Posterior vena cava (tissue), 2 donors: ENCODE measurements at regions of chr6 and their contacts with region 1.

Region 1: DNA sequence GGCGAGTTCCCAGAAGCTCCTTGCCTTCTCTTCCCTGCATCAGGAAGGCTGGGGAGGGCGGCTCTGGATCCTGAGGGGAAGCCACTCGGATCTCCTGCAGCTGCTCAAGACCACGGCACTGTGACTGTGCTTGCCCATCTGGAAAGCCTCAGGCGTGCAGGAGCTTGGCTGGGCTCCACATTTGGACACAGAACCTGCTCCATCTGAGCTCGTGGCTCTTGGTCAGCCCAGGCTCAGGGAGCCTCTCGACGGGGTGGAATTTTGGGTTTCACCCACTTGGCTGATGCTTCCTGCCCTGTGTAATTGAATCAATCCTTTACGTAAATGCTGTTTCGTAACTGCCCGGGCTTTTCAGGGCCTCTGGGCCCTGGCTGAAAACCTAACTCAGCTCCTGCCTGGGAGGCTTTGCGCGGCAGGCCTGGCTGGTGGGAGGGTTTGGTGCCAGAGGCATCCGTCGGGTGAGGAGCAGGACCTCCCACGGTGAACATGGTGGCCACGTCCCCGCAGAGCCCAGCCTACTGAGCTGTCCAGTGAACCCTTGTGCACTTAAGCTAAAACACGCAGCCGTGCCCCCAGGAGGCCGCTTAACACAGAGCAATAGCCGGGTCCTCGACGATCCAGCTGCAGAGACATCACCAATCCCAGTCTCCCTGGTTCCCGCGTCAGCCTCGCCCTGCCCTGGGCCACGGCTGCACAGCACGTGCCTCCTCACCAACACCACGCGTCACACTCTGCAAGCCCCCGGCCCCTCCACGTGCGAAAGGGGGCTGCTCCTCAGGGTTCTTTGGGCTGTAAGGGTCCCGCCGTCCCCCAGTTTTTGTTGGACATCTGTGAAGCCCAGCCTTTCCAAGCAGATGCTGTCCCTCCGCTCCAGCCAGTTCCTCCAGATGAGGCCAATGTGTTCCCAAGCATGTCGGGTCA is 241.0 kb downstream of the DLL1 start:
- DNase-seq: peak; percentile 85

Region 2: GRCh38 chr6:169959136-169960002 is 90.5 kb before region 1 on chr6:
- intact Hi-C with region 1: no loop called
- DNase-seq: peak; percentile 79

Region 3: DNA sequence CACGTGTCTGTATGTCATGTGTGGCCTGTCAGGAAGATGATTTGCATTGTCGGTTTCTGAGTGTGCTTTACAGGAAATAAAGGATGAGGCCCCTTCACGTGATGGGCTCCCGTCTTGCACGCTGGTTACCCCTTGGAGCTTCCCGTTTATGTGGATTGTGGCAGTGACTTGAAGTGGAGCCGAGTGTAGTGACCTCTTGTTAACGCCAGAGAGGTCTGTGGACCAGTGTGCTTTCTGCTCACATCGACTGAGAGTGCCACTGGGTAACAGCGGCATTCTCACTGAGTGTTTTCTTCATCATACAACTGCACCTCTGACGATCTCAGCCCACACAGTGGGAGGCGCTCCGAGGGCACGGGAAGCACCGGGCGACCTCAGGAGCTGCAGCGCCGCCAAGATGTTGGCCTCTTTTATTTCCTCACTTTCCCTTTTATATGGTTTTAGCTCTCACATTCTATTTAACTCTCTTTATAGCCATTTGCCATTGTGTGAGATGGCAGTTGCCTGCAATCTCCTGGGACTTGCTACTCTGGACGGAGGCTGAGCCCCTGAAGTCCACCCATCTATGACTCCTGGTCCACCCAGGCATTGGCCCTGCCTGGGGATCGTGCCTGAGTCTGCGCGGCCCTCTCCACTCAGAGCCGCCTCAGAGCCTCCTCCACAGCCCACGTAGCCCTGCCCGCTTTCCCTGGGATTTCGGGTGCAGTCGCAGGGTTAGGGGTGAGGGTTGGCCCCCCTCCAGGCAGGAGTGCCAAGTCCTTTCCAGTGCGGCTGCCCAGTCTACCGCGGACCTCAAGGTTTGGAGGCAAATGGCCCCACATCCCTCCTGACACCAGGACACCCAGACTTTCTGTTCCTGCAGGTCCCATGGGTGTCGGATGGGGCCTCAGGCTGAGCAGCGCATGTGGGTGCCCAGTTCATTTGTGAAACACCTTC is 59.5 kb before region 1 on chr6:
- intact Hi-C with region 1: no loop called
- DNase-seq: no peak

Region 4: GRCh38 chr6:170003027-170003426 is 46.9 kb before region 1 on chr6:
- intact Hi-C with region 1: loop called in 1 of 2 experiments (anchors 1 kb)
- DNase-seq: no peak

Region 5: GRCh38 chr6:170013815-170014214 is 36.1 kb before region 1 on chr6:
- intact Hi-C with region 1: no loop called
- DNase-seq: no peak

Region 6: GRCh38 chr6:170080828-170081371 is 31.0 kb after region 1 on chr6:
- intact Hi-C with region 1: loop called in 1 of 2 experiments (anchors 1 kb)
- DNase-seq: peak; percentile 73

Region 7: GRCh38 chr6:170329321-170329720 is 279.4 kb after region 1 on chr6:
- intact Hi-C with region 1: no loop called
- DNase-seq: no peak